ENCODE measurements at regions of chr10 and their contacts with region 1.

Region 1: GRCh38 chr10:70602665-70603448 is at the start of gene PRF1:
- DNase-seq: peak; percentile 71
- H3K4me3 Mint-ChIP-seq: peak within 1 kb of the TSS; percentile 93
- H3K27ac Mint-ChIP-seq: peak within 1 kb of the TSS; percentile 90
- H3K4me1 Mint-ChIP-seq: peaks cover 18% of the 10 kb centered on the region
- H3K27me3 Mint-ChIP-seq: no peaks in the 10 kb centered on the region
- total RNA-seq, gene PRF1: 67.7 and 69.6 TPM in 2 replicates

Region 2: GRCh38 chr10:70558871-70559810 is 43.7 kb before region 1 on chr10:
- intact Hi-C with region 1: loop called (anchors 5 kb)
- DNase-seq: peak; percentile 48
- H3K4me3 Mint-ChIP-seq: peak overlapping the region; percentile 59
- H3K27ac Mint-ChIP-seq: peak overlapping the region; percentile 19
- H3K4me1 Mint-ChIP-seq: peaks cover 17% of the 10 kb centered on the region
- H3K27me3 Mint-ChIP-seq: peaks cover 11% of the 10 kb centered on the region

Region 3: GRCh38 chr10:70584909-70585544 is 17.8 kb before region 1 on chr10:
- intact Hi-C with region 1: no loop called
- DNase-seq: no peak
- H3K4me3 Mint-ChIP-seq: no peak overlapping the region
- H3K27ac Mint-ChIP-seq: no peak overlapping the region
- H3K4me1 Mint-ChIP-seq: peaks cover 14% of the 10 kb centered on the region
- H3K27me3 Mint-ChIP-seq: peaks cover 9% of the 10 kb centered on the region